Activated CD4-positive, alpha-beta T cell treated with anti-CD3 and anti-CD28 coated beads for 36 hours (primary cell): ENCODE measurements at regions of chr5 and their contacts with region 1.

Region 1: GRCh38 chr5:81751009-81751835 is at the start of gene SSBP2:
- DNase-seq: peak; percentile 98
- ATAC-seq: peak; percentile 91
- H3K4me3 Mint-ChIP-seq: peak within 1 kb of the TSS; percentile 89
- H3K27ac Mint-ChIP-seq: peak within 1 kb of the TSS; percentile 78
- H3K4me1 Mint-ChIP-seq: peaks cover 33% of the 10 kb centered on the region
- H3K27me3 Mint-ChIP-seq: no peaks in the 10 kb centered on the region
- total RNA-seq, gene SSBP2: 16.9 to 21.4 TPM

Region 2: DNA sequence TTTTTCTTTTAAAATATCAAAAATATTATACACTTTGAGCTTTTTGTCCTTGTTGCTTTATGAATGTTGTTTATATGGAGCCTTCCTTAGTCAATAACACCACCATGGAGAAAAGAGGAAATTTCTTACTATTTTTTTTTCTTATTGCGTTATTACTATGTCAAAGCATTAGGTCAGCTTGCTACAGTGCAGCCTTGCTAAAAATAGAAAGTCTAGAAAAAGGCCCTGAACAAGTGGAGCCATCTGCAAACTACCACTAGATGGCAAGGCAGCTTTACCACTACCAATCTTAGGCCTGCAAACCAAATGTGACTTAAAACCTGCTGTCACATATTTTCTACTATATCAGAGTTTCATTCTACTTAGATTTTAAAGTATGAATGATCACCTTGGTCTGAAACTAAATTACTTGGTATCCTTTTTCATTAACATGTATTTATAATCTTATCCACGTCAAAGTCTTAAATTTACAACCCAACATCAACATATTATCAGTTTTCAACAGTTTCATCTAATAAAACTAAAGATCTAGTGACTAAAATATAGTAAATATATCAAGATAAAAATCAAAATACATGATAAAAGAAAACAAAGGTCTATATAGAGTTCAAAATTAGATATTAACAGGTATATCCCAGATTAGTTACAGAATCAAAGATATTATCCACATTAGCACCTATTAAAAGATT is 244.2 kb before region 1 on chr5:
- CTCF ChIA-PET with region 1: interaction called, 3 read pairs
- POLR2A ChIA-PET with region 1: no interaction called
- intact Hi-C with region 1: loop called (anchors 1 to 2 kb)
- DNase-seq: peak; percentile 52
- ATAC-seq: peak; percentile 100
- H3K4me3 Mint-ChIP-seq: no peak overlapping the region
- H3K27ac Mint-ChIP-seq: no peak overlapping the region
- H3K4me1 Mint-ChIP-seq: no peaks in the 10 kb centered on the region
- H3K27me3 Mint-ChIP-seq: no peaks in the 10 kb centered on the region

Region 3: GRCh38 chr5:81851481-81852178 is 100.4 kb after region 1 on chr5:
- CTCF ChIA-PET with region 1: interaction called, 23 read pairs
- POLR2A ChIA-PET with region 1: interaction called, 21 read pairs
- intact Hi-C with region 1: loop called (anchors 1 kb)
- DNase-seq: peak; percentile 93
- ATAC-seq: peak; percentile 86
- H3K4me3 Mint-ChIP-seq: peak overlapping the region; percentile 78
- H3K27ac Mint-ChIP-seq: peak overlapping the region; percentile 94
- H3K4me1 Mint-ChIP-seq: peaks cover 42% of the 10 kb centered on the region
- H3K27me3 Mint-ChIP-seq: no peaks in the 10 kb centered on the region

Region 4: GRCh38 chr5:82225525-82226172 is 474.4 kb after region 1 on chr5:
- CTCF ChIA-PET with region 1: no interaction called
- POLR2A ChIA-PET with region 1: no interaction called
- intact Hi-C with region 1: loop called in 1 of 2 experiments (anchors 10 kb)
- DNase-seq: peak; percentile 75
- ATAC-seq: peak; percentile 93
- H3K4me3 Mint-ChIP-seq: no peak overlapping the region
- H3K27ac Mint-ChIP-seq: no peak overlapping the region
- H3K4me1 Mint-ChIP-seq: no peaks in the 10 kb centered on the region
- H3K27me3 Mint-ChIP-seq: no peaks in the 10 kb centered on the region